T-cell (primary cell): ENCODE measurements at regions of chr11 and their contacts with region 1.

Region 1: GRCh38 chr11:83241291-83241946 is 44.7 kb downstream of the CCDC90B start:
- DNase-seq: peak in 2 of 35 experiments; percentile 1 to 14
- ATAC-seq: no peak
- H3K4me3 ChIP-seq: no peak overlapping the region
- H3K4me3 Mint-ChIP-seq: no peak overlapping the region
- H3K27ac ChIP-seq: no peak overlapping the region
- H3K27ac Mint-ChIP-seq: no peak overlapping the region
- H3K4me1 ChIP-seq: no peaks in the 10 kb centered on the region
- H3K4me1 Mint-ChIP-seq: no peaks in the 10 kb centered on the region
- H3K27me3 ChIP-seq: no peaks in the 10 kb centered on the region
- H3K27me3 Mint-ChIP-seq: no peaks in the 10 kb centered on the region

Region 2: DNA sequence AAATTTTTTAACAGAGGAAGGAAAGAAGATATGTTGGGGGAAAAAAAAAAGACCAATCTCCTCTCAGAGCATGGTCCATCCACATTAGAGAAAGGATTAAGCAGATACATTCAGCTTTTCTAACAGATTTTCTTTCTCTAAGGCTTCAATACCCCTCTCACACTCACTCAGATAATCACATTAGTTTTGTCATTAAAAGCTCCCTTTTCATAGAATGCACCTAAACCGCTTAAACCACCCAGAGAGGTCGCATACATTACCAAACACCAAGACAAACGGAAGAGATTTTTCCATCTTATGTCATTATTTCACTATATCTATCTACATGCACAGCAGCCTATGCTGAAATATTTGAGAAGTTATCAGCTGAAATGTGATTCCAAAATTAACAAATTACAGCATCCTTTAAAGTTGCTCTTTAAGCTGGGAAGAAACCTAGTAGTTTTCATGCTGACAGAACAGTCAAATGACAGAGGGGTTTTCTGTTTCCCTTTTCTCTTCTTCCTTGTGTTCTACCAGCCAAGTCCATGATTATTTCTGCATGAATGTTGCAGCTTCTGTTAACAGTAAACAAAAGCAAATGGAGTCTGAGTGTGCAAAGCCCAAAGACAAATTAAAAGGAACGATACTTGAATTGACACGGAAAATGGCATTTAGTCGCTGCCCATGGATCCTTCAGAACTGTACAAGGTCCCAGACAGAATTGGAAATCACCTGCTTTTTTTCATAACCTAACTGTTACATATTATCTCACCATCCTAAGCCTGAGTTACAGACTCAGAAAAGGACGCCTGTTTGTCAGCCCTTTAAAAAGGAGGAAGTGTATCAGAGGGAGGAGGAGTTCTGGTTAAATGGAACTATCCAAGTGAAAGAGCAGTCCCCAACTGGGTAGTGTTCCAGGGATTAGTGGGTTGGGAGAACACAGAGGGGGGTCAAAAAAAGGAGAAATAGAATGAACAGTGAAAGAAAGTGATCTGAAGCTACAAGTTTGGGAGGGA is 395.8 kb before region 1 on chr11:
- CTCF ChIA-PET with region 1: interaction called in 1 of 2 experiments, 11 read pairs
- POLR2A ChIA-PET with region 1: no interaction called
- DNase-seq: no peak
- ATAC-seq: no peak
- H3K4me3 ChIP-seq: no peak overlapping the region
- H3K4me3 Mint-ChIP-seq: no peak overlapping the region
- H3K27ac ChIP-seq: no peak overlapping the region
- H3K27ac Mint-ChIP-seq: no peak overlapping the region
- H3K4me1 ChIP-seq: no peaks in the 10 kb centered on the region
- H3K4me1 Mint-ChIP-seq: no peaks in the 10 kb centered on the region
- H3K27me3 ChIP-seq: no peaks in the 10 kb centered on the region
- H3K27me3 Mint-ChIP-seq: no peaks in the 10 kb centered on the region